ENCODE measurements at regions of chr1 and their contacts with region 1.

Region 1: GRCh38 chr1:205983925-205984725 is 19.1 kb downstream of the RAB7B start:
- DNase-seq: peak; percentile 77
- ATAC-seq: peak; percentile 93
- H3K4me3 Mint-ChIP-seq: no peak overlapping the region
- H3K27ac Mint-ChIP-seq: no peak overlapping the region
- H3K4me1 Mint-ChIP-seq: 0 out of 2 replicates have a peak, but pooled peaks cover 4% of the 10 kb centered on the region
- H3K27me3 Mint-ChIP-seq: no peaks in the 10 kb centered on the region; the same call in 1 of the 2 replicates
- CTCF ChIP-seq: peak; percentile 26; the same call in 1 of the 2 replicates

Region 2: GRCh38 chr1:205858141-205858961 is 125.8 kb before region 1 on chr1:
- CTCF ChIA-PET with region 1: no interaction called
- POLR2A ChIA-PET with region 1: no interaction called
- DNase-seq: no peak
- ATAC-seq: no peak
- H3K4me3 Mint-ChIP-seq: no peak overlapping the region
- H3K27ac Mint-ChIP-seq: no peak overlapping the region
- H3K4me1 Mint-ChIP-seq: peaks cover 5% of the 10 kb centered on the region
- H3K27me3 Mint-ChIP-seq: peaks cover 13% of the 10 kb centered on the region; the same call in 1 of the 2 replicates
- CTCF ChIP-seq: no peak

Region 3: GRCh38 chr1:206002871-206003801 is 19.0 kb after region 1 on chr1 and contains the start of gene RAB7B:
- CTCF ChIA-PET with region 1: interaction called, 13 read pairs
- POLR2A ChIA-PET with region 1: no interaction called
- DNase-seq: no peak
- ATAC-seq: no peak
- H3K4me3 Mint-ChIP-seq: no peak within 1 kb of the TSS
- H3K27ac Mint-ChIP-seq: no peak within 1 kb of the TSS
- H3K4me1 Mint-ChIP-seq: peaks cover 5% of the 10 kb centered on the region
- H3K27me3 Mint-ChIP-seq: peaks cover 22% of the 10 kb centered on the region
- CTCF ChIP-seq: no peak
- total RNA-seq, gene RAB7B: not detected in 3 replicates

Region 4: GRCh38 chr1:206106328-206107167 is 122.4 kb after region 1 on chr1:
- CTCF ChIA-PET with region 1: interaction called, 121 read pairs
- POLR2A ChIA-PET with region 1: no interaction called
- DNase-seq: peak; percentile 86
- ATAC-seq: peak; percentile 95
- H3K4me3 Mint-ChIP-seq: no peak overlapping the region
- H3K27ac Mint-ChIP-seq: no peak overlapping the region
- H3K4me1 Mint-ChIP-seq: no peaks in the 10 kb centered on the region
- H3K27me3 Mint-ChIP-seq: no peaks in the 10 kb centered on the region
- CTCF ChIP-seq: peak; percentile 78